ENCODE measurements at regions of chr1 and their contacts with region 1.

Region 1: GRCh38 chr1:23098463-23099170 is 70.0 kb downstream of the LUZP1 start:
- DNase-seq: peak; percentile 84
- H3K4me3 Mint-ChIP-seq: no peak overlapping the region
- H3K27ac Mint-ChIP-seq: peak overlapping the region; percentile 18
- H3K4me1 Mint-ChIP-seq: peaks cover 68% of the 10 kb centered on the region
- H3K27me3 Mint-ChIP-seq: no peaks in the 10 kb centered on the region
- CTCF ChIP-seq: peak; percentile 91

Region 2: GRCh38 chr1:22773981-22774832 is 324.4 kb before region 1 on chr1:
- CTCF ChIA-PET with region 1: no interaction called
- POLR2A ChIA-PET with region 1: no interaction called
- intact Hi-C with region 1: no loop called
- DNase-seq: no peak
- H3K4me3 Mint-ChIP-seq: no peak overlapping the region
- H3K27ac Mint-ChIP-seq: no peak overlapping the region
- H3K4me1 Mint-ChIP-seq: no peaks in the 10 kb centered on the region
- H3K27me3 Mint-ChIP-seq: no peaks in the 10 kb centered on the region
- CTCF ChIP-seq: no peak

Region 3: GRCh38 chr1:23019094-23019862 is 79.3 kb before region 1 on chr1 and contains the start of gene KDM1A:
- CTCF ChIA-PET with region 1: interaction called, 4 read pairs
- POLR2A ChIA-PET with region 1: interaction called, 12 read pairs
- intact Hi-C with region 1: no loop called
- DNase-seq: peak; percentile 98
- H3K4me3 Mint-ChIP-seq: peak within 1 kb of the TSS; percentile 74
- H3K27ac Mint-ChIP-seq: peak within 1 kb of the TSS; percentile 47
- H3K4me1 Mint-ChIP-seq: peaks cover 15% of the 10 kb centered on the region
- H3K27me3 Mint-ChIP-seq: no peaks in the 10 kb centered on the region
- CTCF ChIP-seq: no peak
- total RNA-seq, gene KDM1A: 64.2 and 72.3 TPM in 2 replicates

Region 4: DNA sequence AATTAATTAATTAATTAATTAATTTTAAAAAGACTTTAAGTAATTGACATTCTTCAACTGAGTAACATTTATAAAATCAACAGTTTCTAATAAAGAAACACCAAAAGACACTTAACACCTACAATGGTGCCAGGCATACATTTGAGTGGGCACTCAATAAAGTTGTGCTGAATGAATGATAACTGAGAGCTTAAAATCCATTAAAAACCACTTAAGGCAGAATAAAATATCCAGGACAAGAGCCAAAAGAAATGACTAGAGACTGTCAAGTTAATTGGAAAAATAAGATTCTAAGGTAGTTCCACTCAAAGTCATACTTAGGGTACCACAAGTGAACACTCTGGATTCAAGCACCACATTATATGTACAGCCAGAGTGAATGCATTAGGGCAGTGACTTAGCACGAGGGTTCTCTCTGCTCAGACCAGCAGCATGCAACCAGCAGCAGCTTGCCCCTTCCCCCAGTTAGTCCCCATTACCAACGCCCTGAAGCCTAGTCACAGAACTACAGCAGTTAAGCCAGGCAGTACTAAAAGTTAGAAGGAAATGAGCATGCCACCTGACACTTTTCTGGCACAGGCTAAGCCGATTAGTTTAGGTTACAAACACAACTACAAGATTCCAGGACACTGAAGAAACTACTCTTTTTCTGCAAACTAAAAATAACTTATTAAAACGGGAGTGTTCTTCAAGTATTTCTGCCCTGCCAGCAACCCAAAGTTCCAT is 23.6 kb after region 1 on chr1:
- CTCF ChIA-PET with region 1: interaction called, 9 read pairs
- POLR2A ChIA-PET with region 1: interaction called, 57 read pairs
- intact Hi-C with region 1: no loop called
- DNase-seq: peak; percentile 57
- H3K4me3 Mint-ChIP-seq: no peak overlapping the region
- H3K27ac Mint-ChIP-seq: no peak overlapping the region
- H3K4me1 Mint-ChIP-seq: peaks cover 32% of the 10 kb centered on the region
- H3K27me3 Mint-ChIP-seq: no peaks in the 10 kb centered on the region
- CTCF ChIP-seq: no peak

Region 5: GRCh38 chr1:23177438-23178380 is 79.1 kb after region 1 on chr1:
- CTCF ChIA-PET with region 1: interaction called, 405 read pairs
- POLR2A ChIA-PET with region 1: interaction called, 71 read pairs
- intact Hi-C with region 1: loop called (anchors 1 kb)
- DNase-seq: peak; percentile 60
- H3K4me3 Mint-ChIP-seq: peak overlapping the region; percentile 65
- H3K27ac Mint-ChIP-seq: no peak overlapping the region
- H3K4me1 Mint-ChIP-seq: no peaks in the 10 kb centered on the region
- H3K27me3 Mint-ChIP-seq: no peaks in the 10 kb centered on the region
- CTCF ChIP-seq: no peak

Region 6: GRCh38 chr1:23282957-23283356 is 184.3 kb after region 1 on chr1:
- CTCF ChIA-PET with region 1: no interaction called
- POLR2A ChIA-PET with region 1: interaction called, 3 read pairs
- intact Hi-C with region 1: loop called (anchors 5 kb)
- DNase-seq: peak; percentile 69
- H3K4me3 Mint-ChIP-seq: peak overlapping the region; percentile 26
- H3K27ac Mint-ChIP-seq: peak overlapping the region; percentile 80
- H3K4me1 Mint-ChIP-seq: peaks cover 32% of the 10 kb centered on the region
- H3K27me3 Mint-ChIP-seq: no peaks in the 10 kb centered on the region
- CTCF ChIP-seq: no peak